ENCODE measurements at regions of chr10 and their contacts with region 1.

Region 1: GRCh38 chr10:45220931-45221330 is 94.5 kb downstream of the OR13A1 start:
- DNase-seq: no peak
- H3K4me3 Mint-ChIP-seq: no peak overlapping the region
- H3K27ac Mint-ChIP-seq: no peak overlapping the region
- H3K4me1 Mint-ChIP-seq: no peaks in the 10 kb centered on the region
- H3K27me3 Mint-ChIP-seq: peaks cover under 1% of the 10 kb centered on the region

Region 2: DNA sequence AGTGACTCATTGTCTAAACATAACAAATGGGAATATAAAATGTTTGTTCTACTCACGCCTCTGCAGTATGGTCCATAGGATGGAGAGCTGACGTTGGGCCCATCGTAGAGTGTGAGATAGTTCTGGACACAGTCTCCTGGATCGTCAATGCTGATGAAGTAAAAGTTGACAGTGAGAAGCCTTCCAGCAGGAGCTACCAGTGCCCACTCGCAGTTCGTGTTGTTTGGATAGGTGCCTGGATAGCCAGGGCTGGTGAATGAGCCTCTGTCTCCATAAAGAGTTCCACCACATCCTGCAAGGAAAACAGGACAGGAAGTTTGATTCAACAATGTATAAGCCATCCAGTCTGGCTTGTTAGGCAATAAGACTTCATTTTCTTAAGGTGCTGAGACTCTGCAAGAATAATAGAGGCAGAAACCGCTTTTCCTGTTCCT is 14.9 kb after region 1 on chr10:
- CTCF ChIA-PET with region 1: interaction called, 10 read pairs
- POLR2A ChIA-PET with region 1: no interaction called
- DNase-seq: no peak
- H3K4me3 Mint-ChIP-seq: no peak overlapping the region
- H3K27ac Mint-ChIP-seq: no peak overlapping the region
- H3K4me1 Mint-ChIP-seq: peaks cover 16% of the 10 kb centered on the region
- H3K27me3 Mint-ChIP-seq: peaks cover 3% of the 10 kb centered on the region

Region 3: DNA sequence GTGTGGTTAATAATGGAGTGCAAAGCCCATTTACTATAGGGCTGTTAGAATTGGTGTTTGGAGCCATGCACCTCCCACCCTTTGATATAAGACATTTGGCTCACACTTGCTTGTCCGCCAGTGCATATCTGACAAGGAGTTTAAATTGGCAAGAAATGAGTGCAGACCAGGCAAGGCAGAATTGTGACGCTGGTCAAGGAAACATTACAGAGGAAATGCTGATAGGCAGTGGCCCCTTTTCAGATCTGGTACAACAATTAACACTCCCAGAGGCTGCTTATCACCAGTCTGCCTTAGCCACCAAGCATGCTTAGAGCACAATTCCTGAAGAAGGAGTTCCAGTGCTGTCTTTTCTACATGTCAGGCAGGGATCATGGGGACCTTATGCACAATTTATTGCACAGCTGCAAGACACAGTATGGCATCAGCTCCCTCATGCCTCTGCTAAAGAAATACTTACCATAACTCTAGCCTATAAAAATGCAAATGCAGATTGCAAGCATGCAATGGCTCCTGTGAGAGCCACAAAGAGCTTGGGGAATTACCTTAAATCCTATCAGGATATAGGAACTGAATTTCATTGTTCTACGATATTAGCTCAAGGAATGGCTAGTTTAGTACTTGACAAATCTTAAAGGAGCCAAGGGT is 59.3 kb after region 1 on chr10:
- CTCF ChIA-PET with region 1: no interaction called
- POLR2A ChIA-PET with region 1: no interaction called
- DNase-seq: no peak
- H3K4me3 Mint-ChIP-seq: no peak overlapping the region
- H3K27ac Mint-ChIP-seq: no peak overlapping the region
- H3K4me1 Mint-ChIP-seq: no peaks in the 10 kb centered on the region
- H3K27me3 Mint-ChIP-seq: peaks cover 11% of the 10 kb centered on the region